Tibial artery (tissue), 4 donors: ENCODE measurements at regions of chr12 and their contacts with region 1.

Region 1: DNA sequence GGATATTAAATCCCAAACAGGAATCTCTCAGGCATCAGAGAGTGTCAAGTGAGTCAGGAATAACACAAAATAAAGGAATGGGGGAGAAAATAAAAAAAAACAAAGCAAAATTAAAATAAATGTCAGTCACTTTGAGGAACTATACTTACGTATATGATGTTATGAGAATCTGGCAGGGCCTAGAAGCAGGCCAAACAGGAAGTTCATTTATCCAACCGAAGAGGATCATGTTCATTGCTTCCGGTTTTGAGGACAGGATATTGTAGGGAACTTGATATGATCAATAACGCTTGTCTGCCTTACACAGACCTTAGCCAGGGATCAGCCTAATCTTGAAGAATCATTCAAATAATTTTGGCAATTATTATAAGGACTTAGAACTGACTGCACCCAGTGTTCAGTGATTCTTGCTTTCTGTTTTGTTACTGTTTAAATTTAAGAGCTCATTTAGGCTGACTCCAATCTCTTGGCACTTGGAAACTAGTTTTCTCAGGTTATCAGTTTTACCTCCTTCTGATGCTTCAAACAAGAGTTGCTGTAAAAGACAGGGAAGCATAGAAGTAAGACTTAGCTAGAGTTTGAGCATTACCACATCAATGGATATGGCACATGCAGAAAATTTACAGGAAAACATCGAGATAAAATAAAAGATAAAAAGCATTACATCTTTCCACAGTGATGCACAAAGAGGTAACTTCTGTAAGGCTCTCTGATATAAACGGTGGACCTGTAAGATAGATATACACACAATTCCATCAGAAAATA is 53.4 kb downstream of the ZFC3H1 start:
- DNase-seq: no peak
- H3K4me3 ChIP-seq: no peak overlapping the region
- H3K27ac ChIP-seq: no peak overlapping the region
- H3K4me1 ChIP-seq: peaks cover 0 to under 1% (median 0%) of the 10 kb centered on the region in 4 donors
- H3K27me3 ChIP-seq: no peaks in the 10 kb centered on the region
- CTCF ChIP-seq: no peak

Region 2: GRCh38 chr12:71036526-71036925 is 573.7 kb before region 1 on chr12:
- intact Hi-C with region 1: loop called (anchors 10 kb)
- DNase-seq: no peak
- H3K4me3 ChIP-seq: no peak overlapping the region
- H3K27ac ChIP-seq: no peak overlapping the region
- H3K4me1 ChIP-seq: no peaks in the 10 kb centered on the region
- H3K27me3 ChIP-seq: no peaks in the 10 kb centered on the region
- CTCF ChIP-seq: no peak

Region 3: DNA sequence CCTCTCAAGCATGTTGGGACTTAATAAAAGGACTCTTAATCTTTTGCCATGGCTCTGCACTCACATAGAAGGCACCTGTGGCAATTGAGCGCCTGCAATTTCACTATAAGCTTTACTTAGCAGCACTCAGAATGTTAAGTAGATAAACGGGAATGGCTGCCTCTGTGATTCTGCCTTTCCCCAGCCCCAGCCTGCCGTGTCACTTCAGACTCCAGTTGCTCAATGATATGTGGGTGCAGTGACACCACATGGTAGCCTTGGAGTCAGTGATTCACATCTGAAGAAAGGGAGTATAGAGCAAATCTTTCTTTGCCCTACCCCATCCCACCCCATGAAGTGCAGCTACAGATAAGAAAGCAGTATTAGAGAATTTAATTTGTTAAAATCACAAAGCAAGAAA is 42.7 kb before region 1 on chr12:
- intact Hi-C with region 1: no loop called
- DNase-seq: no peak
- H3K4me3 ChIP-seq: no peak overlapping the region
- H3K27ac ChIP-seq: no peak overlapping the region
- H3K4me1 ChIP-seq: no peaks in the 10 kb centered on the region
- H3K27me3 ChIP-seq: no peaks in the 10 kb centered on the region
- CTCF ChIP-seq: no peak